ENCODE measurements at regions of chr4 and their contacts with region 1.

Region 1: GRCh38 chr4:40940317-40940741 is 190.6 kb downstream of the NSUN7 start:
- DNase-seq: no peak

Region 2: GRCh38 chr4:40238700-40239548 is 701.4 kb before region 1 on chr4:
- intact Hi-C with region 1: no loop called
- DNase-seq: no peak

Region 3: GRCh38 chr4:42339935-42340406 is 1399.6 kb after region 1 on chr4:
- intact Hi-C with region 1: loop called in 1 of 2 experiments (anchors 5 kb)
- DNase-seq: no peak